ENCODE measurements at regions of chr14 and their contacts with region 1.

Region 1: GRCh38 chr14:51963286-51963685 is 26.1 kb upstream of the RTRAF start:
- DNase-seq: no peak
- H3K4me3 ChIP-seq: peak overlapping the region in 1 of 4 donors; percentile 17
- H3K27ac ChIP-seq: peak overlapping the region in 2 of 4 donors; percentile 15 to 20
- H3K4me1 ChIP-seq: peaks cover 0 to 9% (median 2%) of the 10 kb centered on the region in 4 donors
- H3K27me3 ChIP-seq: no peaks in the 10 kb centered on the region
- CTCF ChIP-seq: no peak
- EP300 ChIP-seq: no peak
- POLR2A ChIP-seq: no peak

Region 2: DNA sequence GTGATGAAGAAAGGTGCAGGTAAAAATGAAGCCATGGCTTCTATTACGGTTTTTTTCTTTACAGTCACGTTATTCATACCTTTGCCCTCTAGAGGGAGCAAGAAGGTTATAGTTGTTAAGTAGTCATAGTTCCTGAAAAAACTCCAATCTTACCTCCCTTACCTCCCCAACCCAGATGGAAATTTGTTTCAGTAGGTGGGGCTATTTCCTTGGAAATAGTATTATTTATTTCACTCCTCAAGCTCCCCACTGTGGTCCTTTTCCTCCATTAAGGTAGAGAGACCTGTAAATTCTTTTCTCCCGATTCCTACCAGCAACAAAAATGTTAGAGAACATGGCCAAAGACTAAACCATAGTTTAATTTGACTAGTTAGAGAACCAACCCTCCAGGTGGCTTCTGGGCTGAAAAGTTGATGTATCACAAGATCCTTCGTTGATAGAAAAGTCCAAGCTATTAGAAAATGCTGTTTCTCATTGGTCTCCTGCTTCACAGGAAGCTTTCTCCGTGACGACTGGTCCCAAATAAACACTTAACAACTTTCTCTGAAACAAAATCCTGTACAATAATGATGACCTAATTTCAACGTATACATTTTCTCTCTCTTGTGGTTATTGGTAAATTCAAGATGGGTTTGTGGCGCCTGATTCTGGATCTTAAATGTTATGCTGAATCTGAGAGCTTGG is 679.7 kb before region 1 on chr14:
- in situ Hi-C with region 1: loop called in 2 of 4 experiments (anchors 25 kb)
- intact Hi-C with region 1: no loop called
- DNase-seq: no peak
- H3K4me3 ChIP-seq: no peak overlapping the region
- H3K27ac ChIP-seq: no peak overlapping the region
- H3K4me1 ChIP-seq: peaks cover 0 to 5% (median 0%) of the 10 kb centered on the region in 4 donors
- H3K27me3 ChIP-seq: no peaks in the 10 kb centered on the region
- CTCF ChIP-seq: peak; percentile 70 to 86 (median 73)
- EP300 ChIP-seq: no peak
- POLR2A ChIP-seq: no peak

Region 3: GRCh38 chr14:51651388-51652167 is 311.7 kb before region 1 on chr14 and contains the start of gene FRMD6:
- in situ Hi-C with region 1: loop called in 1 of 4 experiments (anchors 25 kb)
- intact Hi-C with region 1: no loop called
- DNase-seq: peak; percentile 86
- H3K4me3 ChIP-seq: peak within 1 kb of the TSS; percentile 67 to 99 (median 93)
- H3K27ac ChIP-seq: peak within 1 kb of the TSS; percentile 91 to 97 (median 94)
- H3K4me1 ChIP-seq: peaks cover 0 to 33% (median 9%) of the 10 kb centered on the region in 4 donors
- H3K27me3 ChIP-seq: peaks cover 37% of the 10 kb centered on the region
- CTCF ChIP-seq: peak; percentile 71 to 85 (median 79)
- EP300 ChIP-seq: no peak
- POLR2A ChIP-seq: peak; percentile 65
- total RNA-seq, gene FRMD6: 8.4 to 21.7 (median 11.7) TPM

Region 4: DNA sequence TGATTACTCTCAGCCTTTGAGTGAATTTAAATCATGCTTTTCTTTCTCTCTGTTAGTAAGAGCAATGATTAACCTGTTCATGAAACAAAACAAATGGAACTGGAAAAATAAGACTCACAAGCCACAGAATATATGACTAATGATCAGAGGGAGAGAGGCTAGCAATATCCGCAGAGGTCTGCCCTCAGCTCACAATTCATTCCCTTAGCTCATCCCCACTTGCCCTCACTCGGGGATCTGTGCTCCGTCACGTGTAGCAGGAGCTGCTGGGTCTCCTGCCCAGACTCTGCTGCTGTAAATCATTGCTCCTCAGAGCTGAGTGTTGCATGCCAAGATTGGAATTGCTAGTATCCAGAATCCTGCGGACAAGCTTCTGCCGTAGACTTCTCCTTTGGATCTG is 155.9 kb before region 1 on chr14:
- in situ Hi-C with region 1: loop called in 1 of 4 experiments (anchors 25 kb)
- intact Hi-C with region 1: no loop called
- DNase-seq: no peak
- H3K4me3 ChIP-seq: no peak overlapping the region
- H3K27ac ChIP-seq: no peak overlapping the region
- H3K4me1 ChIP-seq: no peaks in the 10 kb centered on the region
- H3K27me3 ChIP-seq: no peaks in the 10 kb centered on the region
- CTCF ChIP-seq: no peak
- EP300 ChIP-seq: no peak
- POLR2A ChIP-seq: no peak